ENCODE measurements at regions of chr6 and their contacts with region 1.

Region 1: DNA sequence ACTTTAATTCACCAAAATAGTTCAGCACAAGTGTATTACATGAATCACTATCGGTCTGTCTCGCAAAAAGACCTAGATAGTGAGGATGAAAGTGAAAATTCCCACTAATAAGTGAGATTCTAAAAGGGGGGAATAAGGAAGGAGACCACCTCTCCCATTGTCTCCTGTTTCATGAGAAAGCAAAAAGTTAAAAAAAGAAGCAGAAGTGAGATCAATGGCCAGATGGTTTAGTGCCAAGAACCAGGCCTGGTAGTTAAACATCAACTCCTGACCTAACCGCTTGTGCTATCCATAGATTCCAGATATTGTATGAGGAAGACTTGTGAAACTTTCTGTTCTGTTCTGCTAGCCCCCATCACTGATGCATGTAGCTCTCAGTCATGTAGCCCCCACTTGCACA is 293.0 kb downstream of the RNGTT start:
- DNase-seq: no peak
- ATAC-seq: no peak
- H3K4me3 ChIP-seq: no peak overlapping the region
- H3K4me3 Mint-ChIP-seq: no peak overlapping the region
- H3K27ac ChIP-seq: no peak overlapping the region
- H3K27ac Mint-ChIP-seq: no peak overlapping the region
- H3K4me1 ChIP-seq: no peaks in the 10 kb centered on the region
- H3K4me1 Mint-ChIP-seq: no peaks in the 10 kb centered on the region
- H3K27me3 ChIP-seq: no peaks in the 10 kb centered on the region
- H3K27me3 Mint-ChIP-seq: no peaks in the 10 kb centered on the region

Region 2: GRCh38 chr6:88519301-88520016 is 150.9 kb before region 1 on chr6:
- CTCF ChIA-PET with region 1: no interaction called
- POLR2A ChIA-PET with region 1: no interaction called
- DNase-seq: no peak
- ATAC-seq: no peak
- H3K4me3 ChIP-seq: no peak overlapping the region
- H3K4me3 Mint-ChIP-seq: no peak overlapping the region
- H3K27ac ChIP-seq: no peak overlapping the region
- H3K27ac Mint-ChIP-seq: no peak overlapping the region
- H3K4me1 ChIP-seq: no peaks in the 10 kb centered on the region
- H3K4me1 Mint-ChIP-seq: no peaks in the 10 kb centered on the region
- H3K27me3 ChIP-seq: no peaks in the 10 kb centered on the region
- H3K27me3 Mint-ChIP-seq: peaks cover 0 to 3% of the 10 kb centered on the region in 2 donors

Region 3: DNA sequence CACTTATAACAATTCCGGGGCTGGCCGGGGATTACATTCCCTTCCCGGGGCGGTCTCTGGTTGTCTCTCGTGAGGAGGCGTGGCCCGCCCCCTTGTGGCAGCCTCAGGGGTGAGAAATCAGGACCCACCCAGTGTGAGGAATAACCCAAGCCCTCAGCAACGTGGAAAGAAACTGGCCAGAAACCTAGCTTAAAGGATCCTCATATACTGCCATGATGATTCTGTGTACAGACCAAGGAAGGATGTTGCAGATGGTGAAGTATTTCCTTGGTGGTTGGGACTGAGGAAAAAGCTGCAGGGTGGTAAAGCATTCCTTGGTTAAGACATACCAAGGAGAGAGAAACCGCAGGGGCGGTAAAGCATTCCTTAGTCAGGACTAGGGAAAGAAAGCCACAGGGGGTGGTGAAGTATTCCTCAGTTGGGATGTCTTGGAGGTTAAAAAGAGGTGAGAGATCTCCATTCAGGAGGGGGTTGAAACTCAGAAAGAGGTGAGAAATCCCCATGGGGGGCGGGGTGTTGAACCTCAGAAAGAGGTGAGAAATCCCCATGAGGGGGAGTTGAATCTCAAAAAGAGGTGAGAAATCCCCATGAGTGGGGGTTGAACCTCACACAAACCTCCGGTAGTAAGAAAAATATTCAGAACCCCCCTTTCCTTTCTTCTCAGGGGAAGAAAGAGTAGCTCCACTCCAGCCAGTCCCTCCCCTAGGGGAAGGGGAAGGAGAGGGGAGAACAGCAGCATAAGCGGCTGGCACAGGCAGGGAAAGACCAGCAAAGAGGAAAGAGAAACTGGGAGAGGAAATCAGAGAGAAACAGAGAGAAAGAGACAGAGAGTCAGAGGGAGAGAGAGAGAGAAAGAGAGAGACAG is 55.0 kb after region 1 on chr6:
- CTCF ChIA-PET with region 1: interaction called in 1 of 2 experiments, 11 read pairs
- POLR2A ChIA-PET with region 1: no interaction called
- DNase-seq: peak in 1 of 35 experiments; percentile 4
- ATAC-seq: no peak
- H3K4me3 ChIP-seq: no peak overlapping the region
- H3K4me3 Mint-ChIP-seq: no peak overlapping the region
- H3K27ac ChIP-seq: no peak overlapping the region
- H3K27ac Mint-ChIP-seq: no peak overlapping the region
- H3K4me1 ChIP-seq: no peaks in the 10 kb centered on the region
- H3K4me1 Mint-ChIP-seq: peaks cover 11 to 16% (median 13%) of the 10 kb centered on the region in 3 donors
- H3K27me3 ChIP-seq: no peaks in the 10 kb centered on the region
- H3K27me3 Mint-ChIP-seq: no peaks in the 10 kb centered on the region

Region 4: DNA sequence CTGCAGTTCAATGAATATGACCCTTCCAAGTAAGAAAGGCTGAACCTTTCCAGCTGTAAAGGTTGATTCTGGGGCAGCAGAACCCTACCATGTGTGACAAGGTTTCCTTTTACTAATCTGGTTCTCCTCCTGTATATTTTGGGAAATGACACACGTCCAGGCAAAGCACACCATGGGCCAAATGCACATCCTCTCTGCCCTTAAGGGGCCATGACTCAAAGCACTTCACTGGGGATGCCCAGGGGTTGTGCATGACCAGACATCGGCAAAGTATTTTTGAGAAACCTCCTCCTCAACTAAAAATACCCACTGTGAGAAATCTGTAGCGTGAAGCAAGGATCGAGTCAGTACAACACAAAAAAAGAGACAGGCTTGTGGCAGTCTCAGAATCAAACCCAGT is 1451.6 kb after region 1 on chr6:
- CTCF ChIA-PET with region 1: no interaction called
- POLR2A ChIA-PET with region 1: no interaction called
- DNase-seq: no peak
- ATAC-seq: no peak
- H3K4me3 ChIP-seq: no peak overlapping the region
- H3K4me3 Mint-ChIP-seq: no peak overlapping the region
- H3K27ac ChIP-seq: no peak overlapping the region
- H3K27ac Mint-ChIP-seq: peak overlapping the region; percentile 23 to 86
- H3K4me1 ChIP-seq: peaks cover 4 to 21% of the 10 kb centered on the region in 2 experiments
- H3K4me1 Mint-ChIP-seq: peaks cover 57 to 76% (median 58%) of the 10 kb centered on the region in 3 donors
- H3K27me3 ChIP-seq: no peaks in the 10 kb centered on the region
- H3K27me3 Mint-ChIP-seq: no peaks in the 10 kb centered on the region